Tibial artery (tissue), 4 donors: ENCODE measurements at regions of chr5 and their contacts with region 1.

Region 1: GRCh38 chr5:177113566-177114424 is 19.8 kb upstream of the NSD1 start:
- DNase-seq: peak; percentile 72 to 83
- H3K4me3 ChIP-seq: no peak overlapping the region
- H3K27ac ChIP-seq: no peak overlapping the region
- H3K4me1 ChIP-seq: peaks cover 0 to 10% (median 4%) of the 10 kb centered on the region in 4 donors
- H3K27me3 ChIP-seq: no peaks in the 10 kb centered on the region
- CTCF ChIP-seq: peak; percentile 97 to 99

Region 2: GRCh38 chr5:177162379-177162778 is 48.6 kb after region 1 on chr5:
- intact Hi-C with region 1: no loop called
- DNase-seq: no peak
- H3K4me3 ChIP-seq: no peak overlapping the region
- H3K27ac ChIP-seq: no peak overlapping the region
- H3K4me1 ChIP-seq: peaks cover 0 to 5% (median 1%) of the 10 kb centered on the region in 4 donors
- H3K27me3 ChIP-seq: no peaks in the 10 kb centered on the region
- CTCF ChIP-seq: no peak

Region 3: GRCh38 chr5:177303121-177303924 is 189.5 kb after region 1 on chr5 and contains the starts of genes PRELID1 and RAB24:
- intact Hi-C with region 1: loop called (anchors 10 kb)
- DNase-seq: peak; percentile 86 to 91
- H3K4me3 ChIP-seq: peak within 1 kb of the TSS; percentile 81 to 95
- H3K27ac ChIP-seq: peak within 1 kb of the TSS; percentile 81 to 88
- H3K4me1 ChIP-seq: peaks cover 0 to 52% (median 33%) of the 10 kb centered on the region in 4 donors
- H3K27me3 ChIP-seq: no peaks in the 10 kb centered on the region
- CTCF ChIP-seq: peak; percentile 21 to 28